HEK293T (cell line): ENCODE measurements at regions of chr9 and their contacts with region 1.

Region 1: DNA sequence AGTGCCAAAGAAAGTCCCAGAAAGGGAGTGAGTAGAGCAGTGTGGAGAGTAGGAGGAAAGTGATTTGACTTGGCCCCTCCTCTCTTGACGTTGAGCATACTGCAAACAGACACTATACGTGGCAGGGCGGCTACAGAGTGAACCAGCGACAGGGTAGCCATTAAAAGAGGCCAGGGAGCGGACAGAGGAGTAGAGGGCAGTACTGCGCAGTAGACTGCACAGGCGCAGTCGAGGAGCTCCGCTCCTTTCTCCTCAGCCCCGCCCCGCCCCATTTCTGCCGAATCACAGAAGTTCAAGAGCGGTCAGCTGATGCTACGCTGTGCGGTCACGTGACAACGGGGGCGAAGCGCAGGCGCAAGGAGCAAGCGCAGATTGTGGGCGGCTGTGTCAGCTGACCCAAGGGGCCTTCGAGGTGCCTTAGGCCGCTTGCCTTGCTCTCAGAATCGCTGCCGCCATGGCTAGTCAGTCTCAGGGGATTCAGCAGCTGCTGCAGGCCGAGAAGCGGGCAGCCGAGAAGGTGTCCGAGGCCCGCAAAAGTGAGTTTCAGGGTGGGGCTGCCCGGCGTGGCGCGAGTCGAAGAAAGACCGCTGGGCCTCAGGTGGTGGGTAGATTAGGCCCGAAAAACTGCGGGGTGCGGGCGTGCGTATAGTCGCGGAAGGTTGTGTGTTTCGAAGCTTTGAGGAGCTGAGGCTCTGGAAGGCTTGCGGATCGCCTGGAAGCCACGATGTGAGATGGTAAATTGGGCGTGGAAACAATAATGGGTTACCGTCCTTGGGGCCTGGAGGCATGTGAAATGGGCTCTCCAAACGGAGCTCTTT is at the start of gene ATP6V1G1:
- DNase-seq: peak; percentile 96

Region 2: GRCh38 chr9:114460513-114461199 is 126.9 kb before region 1 on chr9:
- CTCF ChIA-PET with region 1: no interaction called
- POLR2A ChIA-PET with region 1: no interaction called
- DNase-seq: no peak

Region 3: GRCh38 chr9:114504341-114505186 is 83.0 kb before region 1 on chr9:
- CTCF ChIA-PET with region 1: no interaction called
- POLR2A ChIA-PET with region 1: interaction called, 46 read pairs
- DNase-seq: peak; percentile 39

Region 4: GRCh38 chr9:114551883-114552685 is 35.5 kb before region 1 on chr9:
- CTCF ChIA-PET with region 1: interaction called, 5 read pairs
- POLR2A ChIA-PET with region 1: interaction called, 19 read pairs
- DNase-seq: peak; percentile 77

Region 5: DNA sequence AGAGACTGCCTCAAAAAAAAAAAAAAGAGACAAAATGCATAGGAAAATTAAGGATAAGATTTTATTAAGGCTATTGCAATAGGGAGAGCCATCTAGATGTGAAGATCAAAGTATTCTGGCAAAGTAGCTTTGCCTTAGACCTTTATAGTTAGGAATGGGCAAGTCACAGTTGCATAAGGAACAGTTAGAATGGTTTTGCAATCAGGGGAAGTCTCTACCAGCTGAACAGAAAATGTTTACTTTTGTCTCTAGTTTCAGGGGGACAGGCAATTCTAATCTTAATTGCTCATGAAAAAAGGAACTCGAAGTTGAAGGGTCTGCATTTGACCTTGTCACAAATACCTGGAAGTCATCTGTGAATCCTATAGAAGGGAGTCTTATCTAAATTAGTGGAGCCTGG is 13.2 kb before region 1 on chr9:
- CTCF ChIA-PET with region 1: no interaction called
- POLR2A ChIA-PET with region 1: interaction called, 28 read pairs
- DNase-seq: no peak